Activated CD4-positive, alpha-beta memory T cell treated with anti-CD3 and anti-CD28 coated beads for 36 hours (primary cell): ENCODE measurements at regions of chr12 and their contacts with region 1.

Region 1: DNA sequence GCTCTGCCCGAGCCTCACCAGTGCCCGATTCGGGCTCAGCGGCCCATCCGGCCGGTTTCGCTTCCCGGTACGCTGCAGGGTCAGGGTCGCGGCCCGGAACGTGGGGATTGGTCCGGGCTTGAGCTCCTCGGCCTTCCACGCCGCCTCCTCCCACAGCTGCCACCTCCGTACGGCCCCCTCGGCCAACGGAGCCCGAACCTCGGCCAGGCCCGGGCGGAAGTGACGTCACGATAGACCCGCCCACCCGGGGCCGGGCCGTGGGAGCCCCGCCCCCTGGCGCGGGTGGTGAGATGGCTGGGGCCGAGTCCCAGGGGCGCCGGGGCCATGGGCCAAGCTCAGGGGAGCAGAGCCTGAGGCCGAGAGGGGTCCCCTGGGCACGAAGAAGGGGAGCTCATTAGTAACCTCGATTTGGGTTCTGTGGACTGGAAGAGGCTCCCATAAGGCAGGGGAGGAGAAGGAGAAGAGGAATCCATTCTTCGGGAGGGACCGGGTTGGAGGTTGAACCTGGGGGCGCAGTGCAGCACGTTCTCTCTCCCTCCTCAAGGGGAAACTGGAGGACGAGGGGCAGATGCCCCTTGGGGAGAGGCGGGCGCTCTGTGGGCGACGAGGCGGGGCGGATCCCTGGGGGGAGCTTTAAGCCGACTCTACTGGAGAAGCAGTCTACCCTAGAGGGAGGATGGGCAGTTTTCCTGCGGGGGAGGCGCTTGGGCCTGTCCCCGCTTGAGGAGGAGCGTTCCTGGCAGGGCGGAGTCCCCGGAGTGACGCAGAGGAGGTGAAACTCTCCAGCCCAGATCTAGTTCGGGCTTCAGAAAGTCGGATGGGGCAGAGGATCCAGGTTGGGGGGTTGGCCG is at the start of gene MLF2:
- DNase-seq: peak; percentile 99
- H3K4me3 Mint-ChIP-seq: peak within 1 kb of the TSS; percentile 93
- H3K27ac Mint-ChIP-seq: peak within 1 kb of the TSS; percentile 96
- H3K4me1 Mint-ChIP-seq: peaks cover 24% of the 10 kb centered on the region
- H3K27me3 Mint-ChIP-seq: no peaks in the 10 kb centered on the region
- total RNA-seq, gene MLF2: 140 to 141 TPM

Region 2: GRCh38 chr12:6541371-6542120 is 211.6 kb before region 1 on chr12:
- CTCF ChIA-PET with region 1: no interaction called
- POLR2A ChIA-PET with region 1: no interaction called
- intact Hi-C with region 1: no loop called
- DNase-seq: no peak
- H3K4me3 Mint-ChIP-seq: no peak overlapping the region
- H3K27ac Mint-ChIP-seq: no peak overlapping the region
- H3K4me1 Mint-ChIP-seq: peaks cover 53% of the 10 kb centered on the region
- H3K27me3 Mint-ChIP-seq: no peaks in the 10 kb centered on the region

Region 3: GRCh38 chr12:6764011-6764828 is 11.1 kb after region 1 on chr12:
- CTCF ChIA-PET with region 1: interaction called, 80 read pairs
- POLR2A ChIA-PET with region 1: interaction called, 19 read pairs
- intact Hi-C with region 1: loop called (anchors 2 kb)
- DNase-seq: peak; percentile 72
- H3K4me3 Mint-ChIP-seq: peak overlapping the region; percentile 40
- H3K27ac Mint-ChIP-seq: no peak overlapping the region
- H3K4me1 Mint-ChIP-seq: peaks cover 29% of the 10 kb centered on the region
- H3K27me3 Mint-ChIP-seq: peaks cover 24% of the 10 kb centered on the region

Region 4: GRCh38 chr12:6778574-6779550 is 25.7 kb after region 1 on chr12:
- CTCF ChIA-PET with region 1: interaction called, 81 read pairs
- POLR2A ChIA-PET with region 1: interaction called, 7 read pairs
- intact Hi-C with region 1: loop called (anchors 1 kb)
- DNase-seq: peak; percentile 94
- H3K4me3 Mint-ChIP-seq: peak overlapping the region; percentile 67
- H3K27ac Mint-ChIP-seq: peak overlapping the region; percentile 46
- H3K4me1 Mint-ChIP-seq: peaks cover 77% of the 10 kb centered on the region
- H3K27me3 Mint-ChIP-seq: no peaks in the 10 kb centered on the region

Region 5: DNA sequence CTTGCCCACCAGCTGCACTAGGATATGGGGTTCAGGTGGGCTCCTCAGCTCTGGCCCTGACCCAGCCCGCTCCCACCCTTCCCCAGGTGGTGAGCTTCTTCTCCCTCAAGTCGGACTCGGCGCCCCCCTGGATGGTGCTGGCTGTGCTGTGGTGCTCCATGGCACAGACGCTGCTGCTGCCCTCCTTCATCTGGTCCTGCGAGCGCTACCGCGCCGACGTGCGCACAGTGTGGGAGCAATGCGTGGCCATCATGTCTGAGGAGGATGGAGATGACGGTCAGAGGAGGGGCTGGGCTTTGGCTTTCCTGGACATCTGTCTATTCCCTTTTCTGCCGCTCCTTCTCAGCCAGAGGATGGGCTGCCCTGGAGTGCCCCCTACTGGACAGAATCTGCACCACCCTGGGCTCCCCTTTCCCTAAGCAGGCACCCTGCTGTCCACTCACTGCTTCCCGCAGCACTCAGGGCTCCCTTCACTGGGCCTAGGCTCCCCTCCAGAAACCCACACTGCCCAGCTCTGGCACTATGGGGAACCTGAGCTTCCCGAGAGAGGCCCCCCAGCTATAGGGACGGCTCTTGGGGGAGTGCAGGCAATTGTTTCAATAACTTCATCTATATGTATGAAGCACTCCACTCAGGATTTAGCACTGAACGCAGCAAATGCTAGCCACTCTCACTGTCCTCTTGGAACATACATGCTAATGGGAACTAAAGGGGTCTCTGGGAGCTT is 72.4 kb after region 1 on chr12:
- CTCF ChIA-PET with region 1: interaction called, 91 read pairs
- POLR2A ChIA-PET with region 1: interaction called, 7 read pairs
- intact Hi-C with region 1: loop called (anchors 1 kb)
- DNase-seq: peak; percentile 90
- H3K4me3 Mint-ChIP-seq: no peak overlapping the region
- H3K27ac Mint-ChIP-seq: peak overlapping the region; percentile 16
- H3K4me1 Mint-ChIP-seq: peaks cover 30% of the 10 kb centered on the region
- H3K27me3 Mint-ChIP-seq: peaks cover 29% of the 10 kb centered on the region

Region 6: GRCh38 chr12:6867413-6868210 is 114.5 kb after region 1 on chr12 and contains the start of gene TPI1:
- CTCF ChIA-PET with region 1: interaction called, 19 read pairs
- POLR2A ChIA-PET with region 1: interaction called, 7 read pairs
- intact Hi-C with region 1: no loop called
- DNase-seq: peak; percentile 88
- H3K4me3 Mint-ChIP-seq: peak within 1 kb of the TSS; percentile 98
- H3K27ac Mint-ChIP-seq: peak within 1 kb of the TSS; percentile 98
- H3K4me1 Mint-ChIP-seq: peaks cover 54% of the 10 kb centered on the region
- H3K27me3 Mint-ChIP-seq: no peaks in the 10 kb centered on the region
- total RNA-seq, gene TPI1: 1,432 to 1,495 TPM

Region 7: DNA sequence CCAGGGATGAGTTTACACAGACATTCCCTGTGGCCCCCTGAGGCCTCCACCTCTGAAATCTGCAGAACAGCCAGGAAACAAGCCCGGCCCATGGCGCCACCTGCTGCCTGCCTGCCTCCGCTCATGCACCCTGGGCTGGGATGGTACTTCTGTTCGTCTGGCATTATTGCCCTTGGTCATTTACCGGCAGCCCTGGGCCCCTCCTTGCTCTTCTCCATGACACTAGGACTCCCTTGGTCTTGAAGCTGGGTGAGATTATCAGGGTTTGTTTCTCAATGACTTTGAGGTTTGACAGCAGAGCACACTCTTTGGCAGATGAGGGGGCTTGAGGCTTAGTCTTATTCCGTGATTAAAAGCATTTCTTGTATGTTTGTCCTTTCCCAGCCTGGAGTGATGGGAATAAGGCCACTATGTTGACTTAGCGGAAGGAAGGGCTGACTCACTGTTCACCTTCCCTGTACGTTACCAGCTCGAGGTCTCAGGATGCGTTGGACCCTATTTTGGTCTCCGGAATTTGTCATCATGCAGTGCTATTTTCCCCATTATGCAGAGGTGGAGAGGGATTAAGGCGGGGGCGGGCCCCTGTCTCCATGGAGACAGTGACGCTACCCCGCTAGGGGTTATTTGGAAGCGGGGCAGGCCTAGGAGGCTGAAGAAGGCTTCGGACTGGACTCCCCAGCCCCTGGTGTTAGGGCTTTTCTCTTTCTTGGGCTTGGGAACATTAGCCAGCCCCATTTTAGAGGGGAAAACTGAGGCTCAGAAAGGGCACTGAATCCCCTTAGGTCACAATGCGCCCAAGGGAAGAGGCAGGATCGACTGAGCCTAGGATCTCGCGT is 435.6 kb after region 1 on chr12:
- CTCF ChIA-PET with region 1: no interaction called
- POLR2A ChIA-PET with region 1: no interaction called
- intact Hi-C with region 1: loop called (anchors 2 kb)
- DNase-seq: peak; percentile 86
- H3K4me3 Mint-ChIP-seq: peak overlapping the region; percentile 86
- H3K27ac Mint-ChIP-seq: peak overlapping the region; percentile 94
- H3K4me1 Mint-ChIP-seq: peaks cover 39% of the 10 kb centered on the region
- H3K27me3 Mint-ChIP-seq: no peaks in the 10 kb centered on the region